Activated CD8-positive, alpha-beta memory T cell treated with anti-CD3 and anti-CD28 coated beads, Interleukin-2, amount 10 ng/mL, durations not matched to agents 7 days and 5 days (primary cell): ENCODE measurements at regions of chr15 and their contacts with region 1.

Region 1: GRCh38 chr15:28935326-28935725 is 49.6 kb downstream of the APBA2 start:
- DNase-seq: peak; percentile 78
- ATAC-seq: peak; percentile 72
- H3K4me3 Mint-ChIP-seq: no peak overlapping the region
- H3K27ac Mint-ChIP-seq: no peak overlapping the region
- H3K4me1 Mint-ChIP-seq: peaks cover 40% of the 10 kb centered on the region
- H3K27me3 Mint-ChIP-seq: no peaks in the 10 kb centered on the region

Region 2: DNA sequence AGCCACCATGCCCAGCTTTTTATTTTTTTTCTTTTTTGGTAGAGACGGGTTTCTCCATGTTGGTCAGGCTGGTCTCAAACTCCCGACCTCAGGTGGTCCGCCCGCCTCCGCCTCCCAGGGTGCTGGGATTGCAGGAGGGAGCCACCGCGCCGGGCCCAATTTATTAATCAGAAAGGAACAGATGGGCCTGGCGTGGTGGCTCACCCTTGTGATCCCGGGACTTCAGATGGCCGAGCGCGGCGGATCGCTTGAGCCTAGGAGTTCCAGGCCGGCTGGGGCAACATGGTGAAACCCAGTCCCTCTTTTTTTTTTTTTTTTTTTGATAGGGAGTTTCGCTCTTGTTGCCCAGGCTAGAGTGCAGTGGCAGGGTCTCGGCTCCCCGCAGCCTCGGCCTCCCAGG is 151.5 kb before region 1 on chr15:
- CTCF ChIA-PET with region 1: no interaction called
- DNase-seq: no peak
- ATAC-seq: no peak
- H3K4me3 Mint-ChIP-seq: no peak overlapping the region
- H3K27ac Mint-ChIP-seq: no peak overlapping the region
- H3K4me1 Mint-ChIP-seq: no peaks in the 10 kb centered on the region
- H3K27me3 Mint-ChIP-seq: peaks cover 27% of the 10 kb centered on the region

Region 3: DNA sequence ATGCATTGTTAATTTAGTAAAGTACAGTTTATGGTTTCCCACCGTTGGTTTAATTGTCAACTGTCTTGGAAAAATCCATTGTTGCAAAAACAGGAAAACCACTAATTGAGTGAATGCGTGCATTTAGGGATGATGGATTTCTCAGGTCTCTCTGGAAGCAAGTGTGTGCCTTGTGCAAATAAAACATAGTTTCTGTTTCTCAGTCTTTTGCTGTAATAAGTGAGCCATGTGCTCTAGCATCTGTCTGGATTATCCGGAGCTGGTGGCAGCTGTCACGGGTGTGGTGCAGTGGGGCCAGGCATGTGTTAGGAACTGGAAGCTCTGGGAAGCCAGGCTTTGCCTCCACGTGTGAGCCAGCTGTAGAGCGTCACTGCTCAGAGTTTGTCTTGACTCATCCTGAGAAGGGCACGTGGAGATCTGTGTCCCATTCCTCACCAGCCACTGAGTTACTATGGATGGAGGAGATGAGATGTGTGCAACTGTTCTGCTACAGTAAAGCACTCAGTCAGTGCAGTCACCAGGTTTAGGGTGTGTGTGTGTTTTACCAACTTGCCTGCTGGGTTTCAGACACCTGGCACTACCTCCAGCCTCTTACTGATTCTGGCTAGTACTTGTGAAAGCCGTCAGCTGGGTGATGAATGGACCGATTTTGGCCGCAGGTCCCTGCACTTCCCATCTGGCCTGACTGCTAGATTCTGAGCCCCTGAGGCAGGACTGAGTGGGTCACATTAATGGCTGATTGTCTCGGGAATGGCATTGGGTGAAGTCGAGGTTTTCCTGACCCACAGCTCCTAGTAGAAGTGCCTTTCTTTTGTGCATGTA is 42.3 kb before region 1 on chr15:
- CTCF ChIA-PET with region 1: no interaction called
- DNase-seq: no peak
- ATAC-seq: no peak
- H3K4me3 Mint-ChIP-seq: no peak overlapping the region
- H3K27ac Mint-ChIP-seq: no peak overlapping the region
- H3K4me1 Mint-ChIP-seq: peaks cover 25% of the 10 kb centered on the region
- H3K27me3 Mint-ChIP-seq: no peaks in the 10 kb centered on the region

Region 4: DNA sequence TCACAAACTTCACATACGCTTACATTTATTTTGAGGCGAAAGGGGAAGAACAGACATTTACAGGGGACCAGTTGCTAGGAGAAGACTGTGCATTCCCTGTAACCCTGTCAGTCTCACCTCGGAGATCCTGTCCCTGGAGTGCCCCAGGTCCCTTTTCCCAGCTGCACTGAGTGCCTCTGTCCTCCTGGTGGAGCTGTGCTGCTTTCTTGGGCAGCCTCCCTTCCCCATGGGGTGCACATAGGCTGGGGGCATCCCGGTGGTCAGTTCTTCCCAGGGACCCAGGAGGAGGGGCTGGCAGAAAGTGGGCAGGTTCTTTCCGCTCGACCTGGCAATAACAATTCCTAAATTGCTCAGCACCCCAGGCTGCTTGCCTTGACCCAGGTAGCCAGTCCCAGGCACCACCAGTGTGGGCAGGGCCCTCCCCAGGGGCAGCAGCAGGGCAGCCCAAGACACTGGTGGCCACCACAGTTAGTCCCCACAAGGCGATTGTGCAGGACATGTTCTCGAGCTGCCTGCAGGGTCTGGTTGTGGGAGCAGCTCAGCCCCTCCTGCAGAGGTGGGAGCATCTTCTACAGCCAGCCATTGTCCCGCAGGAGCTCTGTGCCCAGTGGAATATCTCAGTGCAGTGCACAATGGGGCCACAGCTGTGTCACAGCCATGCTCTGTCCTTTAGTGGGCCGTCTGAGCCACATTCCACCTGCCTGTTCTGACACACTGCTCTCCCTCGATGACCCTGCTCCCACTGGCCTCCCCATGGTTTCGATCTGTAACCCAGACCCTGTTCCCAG is 13.2 kb before region 1 on chr15:
- CTCF ChIA-PET with region 1: interaction called, 23 read pairs
- DNase-seq: no peak
- ATAC-seq: no peak
- H3K4me3 Mint-ChIP-seq: no peak overlapping the region
- H3K27ac Mint-ChIP-seq: no peak overlapping the region
- H3K4me1 Mint-ChIP-seq: peaks cover 55% of the 10 kb centered on the region
- H3K27me3 Mint-ChIP-seq: peaks cover 3% of the 10 kb centered on the region

Region 5: GRCh38 chr15:28955160-28956008 is 20.1 kb after region 1 on chr15:
- CTCF ChIA-PET with region 1: interaction called, 18 read pairs
- DNase-seq: peak; percentile 69
- ATAC-seq: peak; percentile 72
- H3K4me3 Mint-ChIP-seq: no peak overlapping the region
- H3K27ac Mint-ChIP-seq: peak overlapping the region; percentile 69
- H3K4me1 Mint-ChIP-seq: peaks cover 35% of the 10 kb centered on the region
- H3K27me3 Mint-ChIP-seq: peaks cover 22% of the 10 kb centered on the region

Region 6: GRCh38 chr15:28975766-28976179 is 40.4 kb after region 1 on chr15:
- CTCF ChIA-PET with region 1: interaction called, 42 read pairs
- DNase-seq: peak; percentile 78
- ATAC-seq: peak; percentile 75
- H3K4me3 Mint-ChIP-seq: no peak overlapping the region
- H3K27ac Mint-ChIP-seq: no peak overlapping the region
- H3K4me1 Mint-ChIP-seq: peaks cover 20% of the 10 kb centered on the region
- H3K27me3 Mint-ChIP-seq: no peaks in the 10 kb centered on the region

Region 7: DNA sequence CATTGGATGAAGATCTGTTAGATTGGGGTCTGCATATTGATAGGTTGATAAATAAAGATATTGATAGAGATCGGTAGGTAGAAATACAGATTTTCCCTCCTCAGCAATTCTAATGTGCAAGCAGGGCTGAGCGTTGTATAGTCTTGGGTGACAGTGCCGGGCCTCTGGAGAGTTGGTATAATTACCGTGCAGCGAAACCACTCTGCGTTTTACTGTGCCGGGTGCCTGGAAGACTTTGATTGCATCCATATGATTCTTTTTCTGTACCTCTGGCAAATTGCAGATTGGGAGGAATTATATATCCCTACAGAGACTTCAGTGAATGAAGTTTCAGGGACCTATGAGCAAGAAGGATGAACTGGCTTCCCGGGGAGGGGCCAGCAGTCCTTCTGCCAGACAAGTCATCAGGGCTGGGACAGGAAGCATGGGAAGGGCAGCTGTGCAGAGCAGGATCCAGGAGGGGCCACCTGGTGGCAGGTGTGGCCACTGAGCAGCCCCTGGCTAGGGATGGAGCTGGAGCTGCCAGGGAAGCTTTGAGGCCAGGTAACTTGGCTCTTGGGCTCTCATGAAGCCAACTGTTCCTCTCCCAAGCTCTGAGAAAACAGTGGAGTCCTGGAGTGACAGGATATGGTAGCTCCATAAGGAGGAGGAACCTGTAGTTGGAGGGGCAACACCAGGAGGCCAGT is 82.9 kb after region 1 on chr15:
- CTCF ChIA-PET with region 1: no interaction called
- DNase-seq: no peak
- ATAC-seq: no peak
- H3K4me3 Mint-ChIP-seq: no peak overlapping the region
- H3K27ac Mint-ChIP-seq: no peak overlapping the region
- H3K4me1 Mint-ChIP-seq: peaks cover 12% of the 10 kb centered on the region
- H3K27me3 Mint-ChIP-seq: no peaks in the 10 kb centered on the region